ENCODE measurements at regions of chr3 and their contacts with region 1.

Region 1: DNA sequence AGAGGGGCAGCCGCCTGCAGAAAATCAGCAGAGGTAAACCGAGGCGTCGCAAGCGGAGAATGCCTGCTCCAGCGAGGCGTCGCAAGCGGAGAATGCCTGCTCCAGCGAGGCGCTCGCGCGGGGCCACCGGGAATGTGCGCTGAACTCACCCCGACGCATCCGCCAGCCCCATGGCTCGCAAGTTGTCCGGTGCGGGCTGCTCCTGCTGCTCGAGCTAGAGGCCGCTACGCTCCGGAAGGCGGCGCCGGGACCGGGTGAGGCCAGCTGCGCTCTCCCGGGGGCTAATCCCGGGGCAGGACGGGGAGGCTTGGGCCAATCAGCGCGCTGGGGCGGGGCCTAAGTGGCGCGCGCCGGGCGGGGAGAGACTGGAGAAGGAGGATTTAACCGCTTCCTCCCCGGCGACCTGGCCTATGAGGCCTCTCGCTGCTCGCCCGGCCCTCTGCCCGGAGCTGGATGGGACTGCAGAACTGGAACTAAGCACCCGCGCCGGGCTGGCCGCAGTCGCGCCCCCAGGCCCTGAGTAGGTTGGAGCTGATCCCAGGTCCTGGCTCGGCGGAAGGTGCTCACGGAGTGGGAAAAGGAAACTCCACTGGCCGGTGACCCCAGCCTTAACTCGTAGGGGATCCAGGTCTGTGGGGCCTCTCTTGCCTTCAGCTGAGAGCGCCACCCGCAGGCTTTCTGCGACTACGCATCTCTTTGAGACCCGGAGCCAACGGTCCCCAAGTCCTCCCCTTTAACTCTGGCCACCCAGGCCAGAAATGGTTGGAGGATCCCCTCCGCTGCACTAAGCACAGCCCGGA is at the start of gene SLC26A6:
- DNase-seq: peak; percentile 99
- total RNA-seq, gene SLC26A6: 8.9 TPM

Region 2: DNA sequence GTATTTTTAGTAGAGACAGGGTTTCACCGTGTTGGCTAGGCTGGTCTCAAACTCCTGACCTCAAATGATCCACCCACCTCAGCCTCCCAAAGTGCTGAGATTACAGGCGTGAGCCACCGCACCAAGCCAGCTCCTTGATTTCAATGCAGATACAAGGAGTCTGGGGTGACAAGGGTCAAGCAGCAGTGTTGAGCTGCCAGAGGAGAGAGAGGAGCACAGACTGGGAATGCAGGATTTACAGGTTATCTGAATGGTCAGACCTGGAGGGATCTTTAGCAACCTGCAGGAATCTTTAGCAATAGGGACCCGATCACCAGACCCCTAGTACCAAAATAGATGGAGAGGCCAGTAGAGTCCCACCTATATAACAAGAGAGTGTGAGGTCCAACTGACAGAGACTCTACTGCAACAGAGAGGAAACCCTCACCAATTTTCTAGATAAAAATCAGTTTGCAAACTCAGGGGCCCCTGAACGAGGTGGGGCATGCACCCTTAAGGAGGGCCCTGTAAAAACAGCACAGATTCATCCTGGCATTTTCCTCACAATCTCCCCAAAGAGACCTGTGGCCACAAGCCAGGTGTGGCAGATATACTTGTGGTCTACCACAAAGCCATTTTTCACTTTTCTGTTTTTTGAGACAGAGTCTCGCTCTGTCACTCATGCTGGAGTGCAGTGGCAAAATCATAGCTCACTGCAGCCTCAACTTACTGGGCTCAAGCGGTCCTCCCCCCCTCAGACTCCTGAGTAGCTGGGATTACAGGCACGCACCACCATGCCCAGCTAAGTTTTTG is 120.8 kb before region 1 on chr3:
- intact Hi-C with region 1: no loop called
- DNase-seq: no peak

Region 3: GRCh38 chr3:48609088-48610005 is 26.1 kb before region 1 on chr3 and contains the start of gene UQCRC1:
- intact Hi-C with region 1: loop called (anchors 2 kb)
- DNase-seq: peak; percentile 97
- total RNA-seq, gene UQCRC1: 753 TPM

Region 4: DNA sequence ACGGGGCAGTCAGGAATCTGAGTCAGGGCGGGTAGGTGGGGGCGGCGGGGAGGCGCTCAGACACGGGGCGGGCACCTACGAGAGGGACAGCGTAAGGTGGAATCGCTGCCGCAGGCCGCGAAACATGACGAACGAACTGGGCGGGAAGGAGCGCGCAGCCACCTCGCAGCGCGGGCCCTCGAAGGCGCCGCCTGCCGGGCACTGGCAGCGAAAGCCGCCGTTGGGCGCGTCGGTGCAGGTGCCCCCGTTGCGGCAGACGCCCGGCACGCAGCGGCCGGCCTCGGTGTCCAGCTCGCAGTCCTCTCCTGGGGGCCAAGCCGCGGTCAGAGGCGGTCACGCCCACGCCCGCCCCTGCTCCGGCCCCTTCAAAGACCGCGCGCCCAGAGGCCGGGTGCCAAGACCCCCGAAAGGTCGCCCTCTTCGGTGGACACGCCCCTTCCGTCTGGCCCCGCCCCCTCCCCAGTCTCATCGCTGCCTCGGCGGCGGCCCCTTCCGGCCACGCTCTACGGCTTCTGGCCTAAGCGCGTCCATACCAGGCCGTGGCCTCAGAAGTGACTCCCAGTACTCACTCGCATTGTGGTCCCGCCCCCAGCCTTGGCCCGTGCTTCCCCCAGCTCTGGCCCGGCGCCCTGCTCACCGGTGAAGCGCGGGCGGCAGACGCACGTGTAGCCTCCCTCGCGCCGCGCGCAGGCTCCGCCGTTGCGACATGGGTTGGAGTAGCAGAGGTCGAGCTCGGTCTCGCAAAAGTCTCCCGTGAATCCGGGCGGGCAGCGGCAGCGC is 20.8 kb after region 1 on chr3:
- intact Hi-C with region 1: loop called (anchors 1 kb)
- DNase-seq: peak; percentile 91

Region 5: GRCh38 chr3:48674505-48674904 is 39.1 kb after region 1 on chr3:
- intact Hi-C with region 1: no loop called
- DNase-seq: no peak

Region 6: GRCh38 chr3:48685602-48686511 is 50.4 kb after region 1 on chr3 and contains the start of gene NCKIPSD:
- intact Hi-C with region 1: loop called (anchors 2 kb)
- DNase-seq: peak; percentile 96
- total RNA-seq, gene NCKIPSD: 22.5 TPM